OCI-LY7 (cell line): ENCODE measurements at regions of chr7 and their contacts with region 1.

Region 1: DNA sequence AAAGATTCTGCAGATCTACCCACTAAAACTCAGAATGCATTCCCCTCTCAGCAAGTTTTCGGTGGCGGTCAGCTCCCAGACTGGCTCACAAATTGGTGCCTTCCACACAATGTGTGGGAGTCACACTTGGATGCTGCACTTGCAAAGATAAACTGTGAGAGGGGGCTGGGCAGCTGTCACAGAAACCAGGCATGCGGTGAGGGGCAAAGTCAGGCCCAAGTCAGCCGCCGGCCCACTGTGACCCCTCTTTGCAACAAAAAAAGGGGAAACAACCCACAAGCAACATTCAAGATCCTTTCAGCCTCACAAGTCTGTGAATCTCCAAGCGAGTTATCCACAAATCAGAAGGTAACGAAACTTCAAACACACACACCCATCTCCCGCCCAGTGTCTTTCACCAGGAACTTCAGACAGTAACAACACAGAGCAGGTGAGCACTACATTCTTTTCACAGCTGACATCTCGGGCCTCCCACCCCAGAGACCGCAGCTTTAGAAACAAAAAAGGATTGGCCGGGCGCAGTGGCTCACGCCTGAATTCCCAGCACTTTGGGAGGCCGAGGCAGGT is 32.0 kb downstream of the SNX8 start:
- DNase-seq: no peak
- H3K4me3 ChIP-seq: no peak overlapping the region
- H3K27ac ChIP-seq: no peak overlapping the region
- H3K4me1 ChIP-seq: no peaks in the 10 kb centered on the region
- CTCF ChIP-seq: no peak

Region 2: DNA sequence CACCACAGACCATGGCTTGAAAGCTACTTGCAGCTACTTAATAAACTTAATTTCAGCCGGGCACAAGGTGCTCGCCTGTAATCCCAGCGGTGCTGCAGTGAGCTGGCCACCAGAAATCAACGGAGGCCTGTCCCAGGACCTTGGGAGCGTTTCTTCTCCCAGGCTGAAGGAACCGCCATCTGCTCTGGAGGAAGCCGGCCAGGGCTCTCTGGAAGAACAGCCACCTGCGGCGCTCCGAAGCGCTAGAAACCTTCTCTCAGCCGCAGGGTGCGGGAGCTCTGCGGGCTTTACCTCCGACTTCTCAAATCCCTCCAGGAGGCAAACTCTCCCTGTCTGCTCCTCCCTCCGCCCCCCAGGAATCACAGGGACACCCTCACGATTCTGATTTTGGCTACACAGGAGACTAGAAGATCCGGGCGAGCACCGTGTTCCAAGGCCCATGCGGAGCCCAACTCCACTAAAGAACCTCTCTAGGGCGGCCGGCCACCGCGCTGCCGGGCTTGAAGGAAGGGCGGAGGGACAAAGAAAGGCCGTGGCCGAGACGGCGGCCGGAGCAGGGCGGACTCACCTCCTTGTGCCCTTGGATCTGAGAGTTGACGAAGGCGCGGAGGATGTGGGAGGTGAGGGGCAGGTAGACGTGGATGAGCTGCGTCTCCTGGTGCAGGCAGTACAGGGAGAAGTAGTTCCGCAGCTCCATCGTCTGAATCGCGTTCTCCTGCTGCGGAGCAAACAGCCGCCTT is 25.8 kb before region 1 on chr7:
- CTCF ChIA-PET with region 1: no interaction called
- POLR2A ChIA-PET with region 1: no interaction called
- intact Hi-C with region 1: loop called (anchors 1 kb)
- DNase-seq: no peak
- H3K4me3 ChIP-seq: no peak overlapping the region
- H3K27ac ChIP-seq: no peak overlapping the region
- H3K4me1 ChIP-seq: peaks cover 19% of the 10 kb centered on the region
- CTCF ChIP-seq: no peak

Region 3: DNA sequence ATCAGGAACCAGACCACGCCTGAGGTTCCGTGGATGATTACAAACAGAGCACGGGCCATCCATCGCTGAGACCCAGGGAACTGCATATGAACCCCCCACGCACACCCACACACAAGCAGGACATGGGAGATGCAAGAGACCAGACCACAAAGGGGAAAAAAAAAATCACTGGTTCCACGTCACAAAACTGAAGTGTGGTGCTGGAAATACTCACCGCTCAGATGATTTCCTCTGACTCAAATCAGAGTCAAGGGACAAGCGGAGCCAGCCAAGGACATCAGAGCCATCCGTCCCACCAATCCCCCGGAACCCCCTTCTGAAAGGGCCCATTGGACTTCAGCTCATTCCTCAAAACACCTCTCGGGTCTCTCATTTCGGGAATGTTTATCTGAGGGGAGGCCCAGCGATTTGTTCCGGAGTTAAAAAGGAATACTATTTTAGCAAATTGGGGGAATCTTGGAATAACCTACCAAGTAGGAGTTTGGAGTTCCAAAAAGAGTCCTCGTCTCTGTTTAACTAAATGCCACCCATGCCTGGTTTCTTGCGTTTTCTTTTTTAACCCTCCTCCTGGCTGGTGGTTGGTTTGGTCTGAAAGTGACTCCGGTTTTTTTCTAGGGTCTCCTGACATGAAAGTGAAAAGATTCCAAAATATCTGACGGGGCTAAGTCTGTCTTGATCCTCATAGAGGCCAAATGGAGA is 17.0 kb after region 1 on chr7:
- CTCF ChIA-PET with region 1: no interaction called
- POLR2A ChIA-PET with region 1: no interaction called
- intact Hi-C with region 1: no loop called
- DNase-seq: peak; percentile 19
- H3K4me3 ChIP-seq: peak overlapping the region; percentile 41
- H3K27ac ChIP-seq: peak overlapping the region; percentile 50
- H3K4me1 ChIP-seq: peaks cover 40% of the 10 kb centered on the region
- CTCF ChIP-seq: no peak